Activated CD4-positive, alpha-beta T cell treated with anti-CD3 and anti-CD28 coated beads for 36 hours (primary cell): ENCODE measurements at regions of chr5 and their contacts with region 1.

Region 1: GRCh38 chr5:43556857-43557542 is at the start of gene PAIP1:
- DNase-seq: peak; percentile 91
- ATAC-seq: peak; percentile 87
- H3K4me3 Mint-ChIP-seq: peak within 1 kb of the TSS; percentile 88
- H3K27ac Mint-ChIP-seq: peak within 1 kb of the TSS; percentile 99
- H3K4me1 Mint-ChIP-seq: peaks cover 18% of the 10 kb centered on the region
- H3K27me3 Mint-ChIP-seq: peaks cover 2% of the 10 kb centered on the region
- total RNA-seq, gene PAIP1: 51.7 to 55.1 TPM

Region 2: DNA sequence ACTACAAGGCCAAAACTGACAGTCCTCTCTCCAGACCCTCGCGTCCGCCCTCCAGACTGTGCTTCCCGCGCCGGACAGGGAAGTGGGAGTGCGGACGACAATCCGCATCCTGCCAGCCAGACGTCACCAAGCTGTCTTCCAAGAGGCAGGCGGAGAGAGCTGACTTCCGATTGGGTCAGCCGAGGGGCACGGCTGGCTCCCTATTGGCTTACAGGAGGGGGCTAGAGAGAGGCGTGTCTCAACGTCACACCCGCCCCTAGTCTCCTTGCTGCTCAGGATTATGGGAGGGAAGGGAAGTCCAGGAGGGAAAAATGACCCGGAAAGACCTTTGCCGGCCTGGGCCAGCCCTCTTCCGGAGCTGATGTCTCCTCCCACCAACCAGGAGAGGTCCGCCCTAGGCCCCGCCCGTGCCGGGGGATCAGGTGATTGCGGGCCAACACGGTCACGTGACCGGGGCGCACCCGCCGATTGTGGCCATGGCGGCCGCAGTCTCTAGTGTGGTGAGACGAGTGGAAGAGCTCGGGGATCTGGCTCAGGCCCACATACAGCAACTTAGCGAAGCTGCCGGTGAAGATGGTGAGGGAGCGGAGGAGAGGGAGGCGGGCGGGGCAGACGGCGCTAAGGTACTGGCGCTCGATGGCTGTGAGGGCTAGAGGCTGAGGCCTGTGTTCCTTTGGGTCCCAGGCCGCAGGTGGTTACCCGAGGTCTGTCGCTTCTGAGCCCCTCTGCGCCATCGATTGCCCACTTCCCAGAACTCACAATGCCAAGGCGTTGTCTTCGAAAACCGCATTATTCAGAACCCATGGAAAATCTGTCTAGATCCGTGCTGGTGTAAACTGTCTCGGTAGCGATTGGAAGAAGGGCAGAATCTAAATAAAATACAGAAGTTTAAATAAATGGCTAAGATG is 1652.9 kb before region 1 on chr5 and contains the start of gene RIMOC1:
- CTCF ChIA-PET with region 1: no interaction called
- POLR2A ChIA-PET with region 1: no interaction called
- intact Hi-C with region 1: loop called in 1 of 2 experiments (anchors 1 kb)
- DNase-seq: peak; percentile 98
- ATAC-seq: peak; percentile 97
- H3K4me3 Mint-ChIP-seq: peak within 1 kb of the TSS; percentile 91
- H3K27ac Mint-ChIP-seq: peak within 1 kb of the TSS; percentile 98
- H3K4me1 Mint-ChIP-seq: peaks cover 47% of the 10 kb centered on the region
- H3K27me3 Mint-ChIP-seq: no peaks in the 10 kb centered on the region
- total RNA-seq, gene RIMOC1: 25.4 to 26.7 TPM

Region 3: DNA sequence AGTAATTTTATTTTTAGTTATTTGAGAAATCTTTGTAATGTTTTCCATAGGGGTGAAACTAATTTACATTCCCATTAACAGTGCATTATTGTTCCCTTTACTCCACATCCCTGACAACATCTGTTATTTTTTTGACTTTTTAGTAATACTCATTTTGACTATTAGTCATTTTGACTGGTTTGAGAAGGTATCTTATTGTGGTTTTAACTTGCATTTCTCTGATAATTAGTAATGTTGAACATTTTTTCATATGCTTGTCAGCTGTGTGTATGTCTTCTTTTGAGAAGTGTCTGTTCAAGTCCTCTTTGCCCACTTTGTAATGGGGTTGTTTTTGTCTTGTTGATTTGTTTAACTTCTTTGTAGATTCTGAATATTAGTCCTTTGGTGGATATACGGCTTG is 772.9 kb before region 1 on chr5:
- CTCF ChIA-PET with region 1: no interaction called
- POLR2A ChIA-PET with region 1: no interaction called
- intact Hi-C with region 1: no loop called
- DNase-seq: no peak
- ATAC-seq: no peak
- H3K4me3 Mint-ChIP-seq: no peak overlapping the region
- H3K27ac Mint-ChIP-seq: no peak overlapping the region
- H3K4me1 Mint-ChIP-seq: no peaks in the 10 kb centered on the region
- H3K27me3 Mint-ChIP-seq: no peaks in the 10 kb centered on the region

Region 4: DNA sequence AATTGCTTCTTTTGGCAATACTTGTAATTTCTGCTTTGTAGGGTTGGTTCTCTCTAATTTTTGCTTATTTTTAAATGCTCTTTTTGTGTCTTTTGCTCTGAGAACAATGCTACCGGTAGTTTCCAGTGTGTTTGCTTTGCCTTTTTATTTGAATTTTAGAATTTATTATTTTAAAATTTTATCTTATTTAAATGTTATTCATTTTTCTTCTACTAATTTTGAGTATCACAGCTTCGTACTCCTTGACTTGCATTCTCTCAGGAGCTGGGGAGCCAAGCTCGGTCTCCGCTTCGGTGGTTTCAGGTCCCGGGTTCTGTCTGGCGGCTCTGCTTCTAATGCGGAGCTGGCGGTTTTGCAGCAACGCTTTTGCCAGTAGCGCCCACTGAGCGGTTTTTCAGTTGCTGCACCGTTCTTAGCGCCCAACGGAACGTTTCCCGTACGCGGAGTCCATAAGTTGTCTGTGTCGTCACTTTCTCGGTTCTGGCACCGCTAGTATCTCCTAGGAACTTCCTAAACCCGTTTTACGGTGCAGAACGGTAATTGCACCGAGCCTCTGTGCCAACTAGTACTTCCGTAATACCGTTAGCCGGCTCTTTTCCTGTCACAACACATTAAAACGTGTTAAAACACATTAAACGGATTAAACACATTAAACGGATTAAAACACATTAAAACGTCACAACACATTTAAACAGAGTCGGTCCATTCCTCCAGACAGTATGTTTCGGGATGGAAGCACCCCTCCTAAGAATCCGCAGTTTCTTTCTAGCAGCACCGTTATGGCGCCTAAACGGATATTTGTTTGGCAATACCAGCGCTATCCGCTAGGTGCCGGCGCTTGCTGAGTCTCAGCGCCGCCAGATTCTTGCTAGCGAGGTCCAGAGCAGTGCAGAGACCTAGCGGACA is 562.5 kb before region 1 on chr5:
- CTCF ChIA-PET with region 1: no interaction called
- POLR2A ChIA-PET with region 1: no interaction called
- intact Hi-C with region 1: loop called in 1 of 2 experiments (anchors 1 kb)
- DNase-seq: peak; percentile 93
- ATAC-seq: peak; percentile 67
- H3K4me3 Mint-ChIP-seq: peak overlapping the region; percentile 98
- H3K27ac Mint-ChIP-seq: peak overlapping the region; percentile 100
- H3K4me1 Mint-ChIP-seq: peaks cover 25% of the 10 kb centered on the region
- H3K27me3 Mint-ChIP-seq: no peaks in the 10 kb centered on the region

Region 5: GRCh38 chr5:43066799-43067741 is 489.9 kb before region 1 on chr5:
- CTCF ChIA-PET with region 1: no interaction called
- POLR2A ChIA-PET with region 1: no interaction called
- intact Hi-C with region 1: loop called in 1 of 2 experiments (anchors 2 kb)
- DNase-seq: peak; percentile 91
- ATAC-seq: peak; percentile 51
- H3K4me3 Mint-ChIP-seq: peak overlapping the region; percentile 97
- H3K27ac Mint-ChIP-seq: peak overlapping the region; percentile 99
- H3K4me1 Mint-ChIP-seq: peaks cover 37% of the 10 kb centered on the region
- H3K27me3 Mint-ChIP-seq: no peaks in the 10 kb centered on the region

Region 6: GRCh38 chr5:43120720-43121564 is 436.1 kb before region 1 on chr5 and contains the start of gene ZNF131:
- CTCF ChIA-PET with region 1: no interaction called
- POLR2A ChIA-PET with region 1: no interaction called
- intact Hi-C with region 1: loop called (anchors 1 to 2 kb)
- DNase-seq: peak; percentile 98
- ATAC-seq: peak; percentile 93
- H3K4me3 Mint-ChIP-seq: peak within 1 kb of the TSS; percentile 94
- H3K27ac Mint-ChIP-seq: peak within 1 kb of the TSS; percentile 94
- H3K4me1 Mint-ChIP-seq: peaks cover 35% of the 10 kb centered on the region
- H3K27me3 Mint-ChIP-seq: no peaks in the 10 kb centered on the region
- total RNA-seq, gene ZNF131: 30.9 to 33.4 TPM

Region 7: GRCh38 chr5:43469702-43470366 is 87.2 kb before region 1 on chr5:
- CTCF ChIA-PET with region 1: no interaction called
- POLR2A ChIA-PET with region 1: no interaction called
- intact Hi-C with region 1: no loop called
- DNase-seq: no peak
- ATAC-seq: no peak
- H3K4me3 Mint-ChIP-seq: no peak overlapping the region
- H3K27ac Mint-ChIP-seq: no peak overlapping the region
- H3K4me1 Mint-ChIP-seq: peaks cover 16% of the 10 kb centered on the region
- H3K27me3 Mint-ChIP-seq: no peaks in the 10 kb centered on the region

Region 8: DNA sequence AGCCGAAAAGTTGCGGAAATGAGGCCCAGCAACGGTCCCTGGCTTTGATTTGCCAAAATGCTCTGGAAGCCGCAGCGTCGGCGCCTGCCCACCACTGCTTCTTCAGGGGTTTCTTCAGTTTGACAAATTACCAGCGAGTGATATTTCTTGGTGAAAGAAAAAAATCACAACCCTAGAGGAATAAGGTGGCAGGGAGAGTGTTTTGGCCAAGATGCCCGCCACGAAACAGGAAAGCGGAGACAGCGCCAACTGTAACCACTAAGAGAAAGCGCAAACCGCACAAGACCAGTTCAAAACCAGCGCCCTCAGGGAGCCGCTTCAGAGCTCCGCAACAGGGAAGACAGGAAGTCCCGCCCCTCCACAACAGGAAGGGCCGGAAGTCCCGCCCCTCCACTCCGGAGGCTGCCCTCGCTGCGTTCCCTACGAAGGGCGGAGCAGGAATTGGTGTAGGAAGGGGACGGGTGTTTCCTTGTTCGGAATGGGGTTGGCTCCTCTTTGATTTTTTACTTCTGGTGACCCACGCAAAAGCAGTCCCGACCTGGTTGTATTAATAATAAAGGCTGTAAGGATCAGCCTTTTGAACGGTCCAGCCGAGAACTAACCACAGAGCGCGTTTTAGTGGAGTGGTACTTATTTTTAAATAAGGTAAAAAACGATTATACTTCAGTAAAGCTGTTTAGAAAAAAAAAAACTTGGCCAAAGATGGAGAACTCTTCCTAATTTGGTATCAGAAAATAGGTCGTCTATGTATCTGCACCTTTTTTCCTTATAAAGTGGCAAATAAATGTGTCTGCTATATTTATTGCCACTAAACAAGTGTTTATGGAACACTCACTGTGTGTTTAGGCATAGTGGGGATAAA is 42.0 kb before region 1 on chr5 and contains the start of gene C5orf34:
- CTCF ChIA-PET with region 1: interaction called, 4 read pairs
- POLR2A ChIA-PET with region 1: interaction called, 4 read pairs
- intact Hi-C with region 1: loop called (anchors 1 kb)
- DNase-seq: peak; percentile 97
- ATAC-seq: peak; percentile 93
- H3K4me3 Mint-ChIP-seq: peak within 1 kb of the TSS; percentile 89
- H3K27ac Mint-ChIP-seq: peak within 1 kb of the TSS; percentile 99
- H3K4me1 Mint-ChIP-seq: peaks cover 23% of the 10 kb centered on the region
- H3K27me3 Mint-ChIP-seq: no peaks in the 10 kb centered on the region
- total RNA-seq, gene C5orf34: 14.4 to 16.8 TPM

Region 9: GRCh38 chr5:43602461-43603343 is 45.7 kb after region 1 on chr5 and contains the start of gene NNT:
- CTCF ChIA-PET with region 1: interaction called, 6 read pairs
- POLR2A ChIA-PET with region 1: interaction called, 7 read pairs
- intact Hi-C with region 1: loop called (anchors 1 kb)
- DNase-seq: peak; percentile 89
- ATAC-seq: peak; percentile 76
- H3K4me3 Mint-ChIP-seq: peak within 1 kb of the TSS; percentile 95
- H3K27ac Mint-ChIP-seq: peak within 1 kb of the TSS; percentile 93
- H3K4me1 Mint-ChIP-seq: peaks cover 29% of the 10 kb centered on the region
- H3K27me3 Mint-ChIP-seq: no peaks in the 10 kb centered on the region
- total RNA-seq, gene NNT: 55.4 to 77.5 TPM

Region 10: DNA sequence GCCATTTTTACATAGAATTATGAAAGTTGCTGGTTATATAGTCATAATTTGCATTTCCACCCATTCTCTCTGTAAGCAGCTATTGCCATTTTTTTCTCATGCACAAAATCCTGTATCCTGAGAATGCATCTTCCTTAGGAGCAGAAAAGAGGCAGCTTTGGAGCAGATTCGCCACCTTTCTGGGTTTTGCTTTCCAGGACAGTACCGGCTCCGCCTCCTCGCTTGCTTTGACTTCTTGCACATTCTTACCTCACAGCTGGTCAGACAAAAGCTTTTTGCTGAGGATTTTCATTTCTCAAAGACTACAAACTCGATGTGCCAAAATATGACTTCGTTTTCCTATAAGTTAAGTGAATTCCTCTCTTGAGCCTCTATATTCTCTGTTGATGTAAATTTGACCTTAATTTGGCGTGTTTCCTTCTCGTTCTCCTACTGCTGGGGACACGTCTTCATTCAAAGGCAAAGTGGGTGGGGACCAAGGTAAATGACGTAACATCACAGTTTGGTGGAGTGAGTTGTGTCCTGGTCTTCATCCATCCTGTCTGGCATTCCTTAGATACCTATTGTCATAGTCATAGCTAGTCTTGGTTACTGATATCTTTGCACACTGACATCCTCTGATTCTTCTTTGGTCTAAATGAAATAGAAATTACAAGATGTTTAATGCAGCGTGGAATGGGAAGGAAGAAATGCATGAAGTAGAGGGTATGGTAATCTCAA is 154.3 kb after region 1 on chr5:
- CTCF ChIA-PET with region 1: no interaction called
- POLR2A ChIA-PET with region 1: no interaction called
- intact Hi-C with region 1: no loop called
- DNase-seq: no peak
- ATAC-seq: no peak
- H3K4me3 Mint-ChIP-seq: no peak overlapping the region
- H3K27ac Mint-ChIP-seq: no peak overlapping the region
- H3K4me1 Mint-ChIP-seq: no peaks in the 10 kb centered on the region
- H3K27me3 Mint-ChIP-seq: no peaks in the 10 kb centered on the region

Region 11: GRCh38 chr5:43839218-43839617 is 282.2 kb after region 1 on chr5:
- CTCF ChIA-PET with region 1: no interaction called
- POLR2A ChIA-PET with region 1: no interaction called
- intact Hi-C with region 1: no loop called
- DNase-seq: no peak
- ATAC-seq: no peak
- H3K4me3 Mint-ChIP-seq: no peak overlapping the region
- H3K27ac Mint-ChIP-seq: no peak overlapping the region
- H3K4me1 Mint-ChIP-seq: no peaks in the 10 kb centered on the region
- H3K27me3 Mint-ChIP-seq: no peaks in the 10 kb centered on the region